K562 (cell line): ENCODE measurements at regions of chr11 and their contacts with region 1.

Region 1: DNA sequence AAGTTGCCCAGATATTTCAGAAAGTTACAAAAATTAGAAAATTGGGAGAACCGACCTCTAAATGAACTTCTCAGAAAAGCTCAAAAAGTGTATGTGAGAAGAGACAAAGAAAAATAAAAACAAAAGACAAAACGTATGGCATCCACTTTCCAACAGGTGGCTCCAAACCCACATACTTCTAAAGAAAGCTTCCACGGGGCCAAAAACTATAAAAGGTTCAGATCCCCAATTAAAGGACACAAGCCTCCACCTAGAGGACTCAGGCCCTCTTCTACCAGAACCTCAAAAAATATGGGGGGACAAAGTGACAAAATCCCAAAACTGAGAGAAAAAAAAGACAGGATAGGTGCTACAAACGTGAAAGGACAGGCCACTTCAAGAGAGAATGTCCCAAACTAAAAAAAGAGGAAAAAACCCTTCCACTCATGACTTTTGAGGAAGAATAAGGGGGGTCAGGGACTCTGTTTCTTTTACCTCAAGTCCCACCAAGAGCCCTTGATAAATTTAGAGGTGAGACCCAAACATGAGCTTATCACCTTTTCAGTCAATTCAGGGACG is 8.8 kb downstream of the SCGB2A1 start:
- DNase-seq: peak in 2 of 4 experiments; percentile 22 to 40
- ATAC-seq: peak; percentile 56; the same call in 2 of the 3 replicates
- H3K4me3 ChIP-seq: no peak overlapping the region
- H3K27ac ChIP-seq: no peak overlapping the region
- H3K4me1 ChIP-seq: no peaks in the 10 kb centered on the region
- H3K27me3 ChIP-seq: peaks cover 7 to 14% of the 10 kb centered on the region in 2 experiments; a peak in 3 of 5 replicates
- CTCF ChIP-seq: peak; percentile 55 to 75 (median 58); a peak in 5 of 6 replicates
- EP300 ChIP-seq: no peak
- POLR2A ChIP-seq: no peak
- RAD21 ChIP-seq: peak; percentile 71 to 78

Region 2: DNA sequence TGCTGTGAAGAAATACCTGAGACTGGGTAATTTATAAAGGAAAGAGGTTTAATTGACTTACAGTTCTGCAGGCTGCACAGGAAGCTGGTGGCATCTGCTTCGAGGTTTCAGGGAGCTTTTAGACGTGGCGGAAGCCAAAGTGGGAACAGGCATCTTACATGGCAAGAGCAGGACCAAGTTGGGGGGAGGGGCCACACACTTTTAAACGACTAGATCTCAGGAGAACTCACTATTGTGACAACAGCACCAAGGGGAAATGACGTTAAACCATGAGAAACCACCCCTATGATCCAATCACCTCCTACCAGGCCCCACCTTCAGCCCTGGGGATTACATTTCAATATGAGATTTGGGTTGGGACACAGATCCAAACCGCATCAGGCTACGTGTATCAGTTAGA is 92.7 kb after region 1 on chr11:
- CTCF ChIA-PET with region 1: no interaction called
- POLR2A ChIA-PET with region 1: no interaction called
- in situ Hi-C with region 1: loop called (anchors 10 kb)
- intact Hi-C with region 1: loop called (anchors 5 kb)
- DNase-seq: no peak
- ATAC-seq: no peak
- H3K4me3 ChIP-seq: no peak overlapping the region
- H3K27ac ChIP-seq: no peak overlapping the region
- H3K4me1 ChIP-seq: peaks cover 0 to 4% of the 10 kb centered on the region in 2 experiments; a peak in 1 of 5 replicates
- H3K27me3 ChIP-seq: peaks cover 7 to 18% of the 10 kb centered on the region in 2 experiments; a peak in 3 of 5 replicates
- CTCF ChIP-seq: no peak
- EP300 ChIP-seq: no peak
- POLR2A ChIP-seq: no peak
- RAD21 ChIP-seq: no peak

Region 3: GRCh38 chr11:62315431-62315830 is 98.2 kb after region 1 on chr11:
- CTCF ChIA-PET with region 1: no interaction called
- POLR2A ChIA-PET with region 1: no interaction called
- in situ Hi-C with region 1: loop called (anchors 10 kb)
- intact Hi-C with region 1: loop called (anchors 5 kb)
- DNase-seq: no peak
- ATAC-seq: no peak
- H3K4me3 ChIP-seq: no peak overlapping the region
- H3K27ac ChIP-seq: no peak overlapping the region
- H3K4me1 ChIP-seq: peaks cover 0 to 4% of the 10 kb centered on the region in 2 experiments; a peak in 2 of 5 replicates
- H3K27me3 ChIP-seq: peaks cover 31 to 33% of the 10 kb centered on the region in 2 experiments
- CTCF ChIP-seq: no peak
- EP300 ChIP-seq: no peak
- POLR2A ChIP-seq: no peak
- RAD21 ChIP-seq: no peak

Region 4: DNA sequence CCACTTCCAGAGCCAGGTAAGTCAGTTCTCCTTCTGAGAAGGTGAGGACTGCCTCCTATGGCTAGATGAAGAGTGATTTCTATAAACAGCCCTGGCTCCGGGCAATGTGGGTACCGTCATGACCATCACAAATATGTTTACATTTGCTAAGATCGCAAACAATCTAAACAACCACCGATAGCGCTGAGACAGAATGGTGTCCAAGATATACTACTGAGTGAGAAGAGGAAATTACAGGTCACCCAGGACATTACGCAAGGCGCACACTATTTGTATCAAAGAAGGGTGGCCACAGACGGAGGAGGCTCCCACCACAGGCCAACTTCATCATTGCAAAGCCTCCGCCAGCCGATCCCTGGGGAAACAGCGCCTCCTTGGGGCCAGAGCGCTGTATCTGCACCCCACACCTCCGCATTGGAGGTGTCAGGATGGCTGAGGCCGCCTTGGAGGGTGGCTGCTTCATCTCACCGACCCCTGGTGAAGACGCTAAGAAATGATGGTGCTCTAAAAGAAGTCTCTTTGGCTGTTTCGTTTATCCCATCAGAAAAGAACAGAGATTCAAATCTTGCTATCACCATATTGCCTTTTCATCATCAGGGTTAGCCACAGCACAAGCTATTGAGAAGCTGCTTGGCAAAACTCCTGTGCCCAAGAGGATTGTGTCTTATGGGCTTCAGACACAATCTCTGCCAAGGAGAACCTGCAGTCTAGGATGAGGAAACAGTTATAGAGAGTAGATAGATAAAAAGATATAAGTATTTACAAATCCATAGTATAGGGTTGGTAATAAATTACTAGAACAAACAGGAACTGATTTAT is 107.7 kb after region 1 on chr11:
- CTCF ChIA-PET with region 1: interaction called, 9 read pairs
- POLR2A ChIA-PET with region 1: interaction called, 3 read pairs
- in situ Hi-C with region 1: no loop called
- intact Hi-C with region 1: loop called (anchors 2 kb)
- DNase-seq: peak; percentile 79 to 85 (median 80)
- ATAC-seq: peak; percentile 100
- H3K4me3 ChIP-seq: no peak overlapping the region
- H3K27ac ChIP-seq: no peak overlapping the region
- H3K4me1 ChIP-seq: no peaks in the 10 kb centered on the region; a peak in 1 of 5 replicates
- H3K27me3 ChIP-seq: peaks cover 12 to 18% of the 10 kb centered on the region in 2 experiments; a peak in 4 of 5 replicates
- CTCF ChIP-seq: peak; percentile 98 to 100 (median 99)
- EP300 ChIP-seq: no peak
- POLR2A ChIP-seq: no peak
- RAD21 ChIP-seq: peak; percentile 86 to 95

Region 5: DNA sequence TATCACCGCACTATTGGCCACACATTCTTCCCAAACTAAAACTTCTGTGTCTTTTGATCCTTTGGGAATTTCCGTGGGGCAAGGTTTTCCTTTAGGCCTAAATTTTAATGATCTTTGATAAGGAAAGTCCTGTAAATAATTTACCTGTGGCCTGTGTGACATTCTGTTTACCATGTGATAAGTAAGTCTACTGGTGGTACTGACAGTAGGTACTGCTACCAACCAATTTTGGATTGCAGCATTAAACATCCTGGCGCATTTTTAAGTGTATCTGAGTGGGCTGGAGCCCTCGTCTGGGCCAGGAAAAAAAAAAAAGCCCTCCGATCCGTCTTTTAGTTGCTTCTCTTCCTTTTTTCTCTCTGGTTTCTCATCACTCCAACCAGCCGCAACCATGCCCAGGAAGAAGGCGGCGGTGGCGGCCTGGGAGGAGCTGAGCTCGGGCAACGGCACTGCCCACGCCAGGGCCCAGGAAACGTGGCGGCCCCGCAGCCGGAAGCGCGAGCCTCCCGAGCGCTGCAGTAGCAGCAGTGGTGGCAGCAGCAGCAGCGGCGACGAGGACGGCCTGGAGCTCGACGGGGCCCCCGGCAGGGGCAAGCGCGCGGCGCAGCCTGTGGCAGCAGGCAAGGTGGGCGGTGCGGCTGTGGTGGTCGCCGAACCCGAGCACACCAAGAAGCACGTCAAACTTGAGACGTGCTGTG is 153.6 kb after region 1 on chr11:
- CTCF ChIA-PET with region 1: no interaction called
- POLR2A ChIA-PET with region 1: interaction called, 3 read pairs
- in situ Hi-C with region 1: no loop called
- intact Hi-C with region 1: loop called (anchors 5 kb)
- DNase-seq: no peak
- ATAC-seq: no peak
- H3K4me3 ChIP-seq: no peak overlapping the region
- H3K27ac ChIP-seq: no peak overlapping the region
- H3K4me1 ChIP-seq: peaks cover 14% of the 10 kb centered on the region in 2 experiments; a peak in 4 of 5 replicates
- H3K27me3 ChIP-seq: no peaks in the 10 kb centered on the region
- CTCF ChIP-seq: no peak
- EP300 ChIP-seq: no peak
- POLR2A ChIP-seq: no peak
- RAD21 ChIP-seq: no peak